HEK293 (cell line): ENCODE measurements at regions of chr1 and their contacts with region 1.

Region 1: DNA sequence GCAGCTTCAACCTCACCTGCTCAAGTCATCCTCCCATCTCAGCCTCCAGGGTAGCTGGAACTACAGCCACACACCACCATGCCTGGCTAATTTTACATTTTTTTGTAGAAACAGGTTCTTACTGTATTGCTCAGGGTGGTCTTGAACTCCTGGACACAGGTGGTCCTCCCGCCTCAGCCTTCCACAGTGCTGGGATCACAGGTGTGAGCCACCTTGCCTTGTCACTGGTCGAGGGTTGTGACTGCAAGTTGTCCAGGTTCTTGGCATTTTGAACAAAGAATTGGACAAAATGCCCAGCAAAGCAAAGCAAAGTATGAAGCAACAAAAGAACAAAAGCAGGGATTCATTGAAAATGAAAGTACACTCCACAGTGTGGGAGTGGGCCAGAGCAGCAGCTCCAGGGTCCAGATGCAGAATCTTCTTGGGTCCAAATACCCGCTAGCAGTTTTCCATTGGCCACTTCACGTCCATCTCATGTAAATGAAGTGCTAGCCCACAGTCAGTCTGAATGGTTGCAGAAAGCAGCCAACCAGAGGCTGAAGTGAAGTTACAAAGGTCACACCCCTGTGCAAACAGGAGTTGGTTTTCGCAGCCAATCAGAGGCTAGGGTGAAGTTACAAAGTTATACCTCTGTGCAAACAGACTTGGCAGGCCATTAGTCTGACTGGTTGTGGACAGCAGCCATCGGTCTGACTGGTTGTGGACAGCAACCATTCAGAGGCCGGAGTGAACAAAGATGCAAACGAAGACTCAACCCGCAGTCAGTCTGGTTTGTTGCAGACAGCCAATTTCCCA is 109.5 kb upstream of the KIF26B start:
- H3K4me3 ChIP-seq: no peak overlapping the region
- H3K27ac ChIP-seq: no peak overlapping the region
- H3K4me1 ChIP-seq: 0 out of 2 replicates have a peak, but pooled peaks cover 2% of the 10 kb centered on the region
- CTCF ChIP-seq: no peak

Region 2: GRCh38 chr1:244801246-244801645 is 244.0 kb before region 1 on chr1:
- CTCF ChIA-PET with region 1: interaction called, 15 read pairs
- POLR2A ChIA-PET with region 1: no interaction called
- H3K4me3 ChIP-seq: no peak overlapping the region
- H3K27ac ChIP-seq: no peak overlapping the region
- H3K4me1 ChIP-seq: no peaks in the 10 kb centered on the region
- CTCF ChIP-seq: no peak

Region 3: GRCh38 chr1:244843148-244843978 is 201.9 kb before region 1 on chr1:
- CTCF ChIA-PET with region 1: interaction called, 10 read pairs
- POLR2A ChIA-PET with region 1: no interaction called
- H3K4me3 ChIP-seq: no peak overlapping the region
- H3K27ac ChIP-seq: no peak overlapping the region
- H3K4me1 ChIP-seq: no peaks in the 10 kb centered on the region
- CTCF ChIP-seq: no peak

Region 4: DNA sequence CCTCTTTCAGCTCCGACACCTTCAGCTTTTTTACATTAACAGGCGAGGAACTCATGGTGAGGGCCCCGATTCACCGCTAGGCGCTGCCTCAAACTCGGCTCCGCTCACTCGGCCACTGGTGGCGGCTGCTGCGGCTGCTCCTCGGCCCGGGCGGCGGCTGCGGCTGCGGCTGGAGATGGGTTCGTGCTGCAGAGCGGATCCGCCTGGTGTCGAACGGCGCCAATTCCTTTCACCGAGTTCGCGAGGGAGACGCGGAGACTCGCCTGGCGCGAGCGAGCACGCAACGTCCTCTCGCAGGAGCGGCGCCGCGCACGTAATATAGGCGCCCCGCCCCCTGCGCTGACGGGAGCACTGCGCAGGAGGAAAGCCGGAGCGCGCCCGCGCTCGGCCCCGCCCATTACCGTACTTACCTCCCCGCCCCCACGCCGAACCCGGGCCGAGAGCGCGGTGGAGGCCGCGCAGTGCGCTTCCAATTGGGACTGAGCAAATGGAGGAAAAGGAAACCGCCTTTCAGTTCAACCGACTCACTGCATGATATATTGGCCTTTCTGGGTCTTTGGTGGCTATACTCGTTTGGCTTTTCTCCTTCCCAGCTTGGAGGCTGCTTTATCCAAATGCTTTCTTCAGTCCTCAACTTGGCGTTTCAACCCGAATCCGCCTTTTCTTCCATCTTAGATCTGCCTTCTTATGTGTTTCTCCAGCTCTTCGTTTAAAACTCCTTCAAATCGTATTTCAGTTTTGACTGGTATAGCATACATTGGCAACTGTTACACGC is 180.8 kb before region 1 on chr1 and contains the start of gene HNRNPU:
- CTCF ChIA-PET with region 1: interaction called, 38 read pairs
- POLR2A ChIA-PET with region 1: interaction called, 4 read pairs
- H3K4me3 ChIP-seq: peak within 1 kb of the TSS; percentile 80
- H3K27ac ChIP-seq: peak within 1 kb of the TSS; percentile 100
- H3K4me1 ChIP-seq: peaks cover 16% of the 10 kb centered on the region
- CTCF ChIP-seq: peak; percentile 61

Region 5: GRCh38 chr1:244970661-244971551 is 74.4 kb before region 1 on chr1:
- CTCF ChIA-PET with region 1: interaction called, 38 read pairs
- POLR2A ChIA-PET with region 1: interaction called, 3 read pairs
- H3K4me3 ChIP-seq: peak overlapping the region; percentile 86
- H3K27ac ChIP-seq: peak overlapping the region; percentile 100
- H3K4me1 ChIP-seq: no peaks in the 10 kb centered on the region
- CTCF ChIP-seq: peak; percentile 99

Region 6: DNA sequence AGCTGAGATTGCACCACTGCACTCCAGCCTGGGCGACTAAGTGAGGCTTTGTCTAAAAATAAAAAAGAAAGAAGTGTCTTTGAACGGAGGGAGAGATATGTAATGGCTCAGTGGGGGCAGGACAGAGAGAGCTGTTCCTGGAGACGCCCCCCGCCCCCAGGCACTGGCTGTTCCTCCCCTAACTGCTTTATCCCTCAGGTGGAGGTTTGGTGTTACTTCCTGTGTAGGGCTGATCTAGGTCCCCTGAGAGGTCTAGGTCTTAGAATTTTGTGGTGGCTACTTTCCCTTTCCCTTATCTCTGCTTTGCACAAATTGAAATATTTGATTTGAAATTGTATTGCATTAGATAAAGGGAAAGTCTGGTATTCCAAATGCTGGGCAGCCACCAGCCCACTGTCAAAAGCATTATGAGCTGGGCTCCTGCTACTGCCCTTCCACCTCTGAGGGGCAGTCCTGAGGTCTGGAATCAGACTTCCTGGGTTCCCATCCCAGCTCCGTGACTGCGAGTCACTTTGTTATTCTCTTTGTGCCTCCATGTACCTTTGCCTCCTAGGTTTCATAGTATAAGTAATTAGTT is 25.3 kb before region 1 on chr1:
- CTCF ChIA-PET with region 1: interaction called, 16 read pairs
- POLR2A ChIA-PET with region 1: no interaction called
- H3K4me3 ChIP-seq: no peak overlapping the region
- H3K27ac ChIP-seq: no peak overlapping the region
- H3K4me1 ChIP-seq: peaks cover 10% of the 10 kb centered on the region
- CTCF ChIP-seq: no peak

Region 7: DNA sequence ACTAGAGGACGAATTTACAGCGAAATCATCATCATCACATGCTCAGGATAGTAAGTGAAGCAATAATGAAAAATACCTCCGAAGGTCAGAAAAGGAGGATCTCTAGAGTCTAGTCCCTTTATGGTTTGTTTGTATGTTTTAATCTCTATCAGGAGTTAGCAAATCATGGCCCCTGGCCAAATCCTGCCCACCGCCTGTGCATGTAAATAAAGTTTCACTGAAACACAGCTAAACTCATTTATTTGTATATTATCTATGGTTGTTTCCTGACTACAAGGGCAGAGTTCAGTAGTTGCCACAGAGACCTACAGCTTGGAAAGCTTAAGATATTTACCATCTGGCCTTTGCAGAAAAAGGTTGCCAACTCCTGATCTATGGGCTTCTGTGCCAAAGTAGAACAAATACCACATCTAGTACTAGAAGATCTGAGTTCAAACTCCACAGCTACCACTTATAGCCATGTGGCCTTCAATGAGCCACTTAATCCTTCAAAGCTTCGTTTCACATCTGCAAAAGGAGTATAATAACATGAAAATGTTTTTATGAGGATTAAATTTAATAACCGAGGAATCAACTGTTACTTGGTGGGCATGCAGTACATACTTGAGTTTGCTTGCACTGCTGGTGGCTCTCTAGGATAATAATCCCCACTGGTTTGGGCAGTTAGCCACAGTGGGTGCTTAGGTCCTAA is 15.5 kb after region 1 on chr1:
- CTCF ChIA-PET with region 1: interaction called, 28 read pairs
- POLR2A ChIA-PET with region 1: no interaction called
- H3K4me3 ChIP-seq: no peak overlapping the region
- H3K27ac ChIP-seq: 0 out of 2 replicates have a peak overlapping the region, but pooled peaks have one; percentile 7
- H3K4me1 ChIP-seq: peaks cover 12% of the 10 kb centered on the region
- CTCF ChIP-seq: no peak; the same call in 1 of the 2 replicates